Activated naive CD4-positive, alpha-beta T cell treated with anti-CD3 and anti-CD28 coated beads for 36 hours (primary cell): ENCODE measurements at regions of chr16 and their contacts with region 1.

Region 1: DNA sequence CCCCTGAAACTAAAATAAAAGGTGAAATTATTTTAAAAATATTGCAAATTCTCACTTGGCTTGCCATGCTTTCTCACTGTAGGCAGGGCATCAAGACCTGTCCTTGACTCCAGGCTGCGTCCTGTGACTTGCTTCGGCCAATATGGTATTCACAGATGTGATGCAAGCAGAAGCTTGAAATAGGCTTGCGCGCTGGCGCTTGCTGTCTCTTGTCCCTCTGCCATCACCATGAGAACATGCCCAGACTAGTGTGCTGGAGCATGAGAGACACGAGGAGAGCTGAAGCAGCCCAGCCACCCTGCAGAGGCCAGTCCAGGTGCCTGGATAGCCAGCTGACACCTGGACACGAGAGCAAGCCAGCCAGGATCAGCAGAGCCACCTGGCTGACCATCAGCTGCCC is 21.8 kb upstream of the ZKSCAN2 start:
- DNase-seq: no peak
- H3K4me3 Mint-ChIP-seq: no peak overlapping the region
- H3K27ac Mint-ChIP-seq: no peak overlapping the region
- H3K4me1 Mint-ChIP-seq: peaks cover 2% of the 10 kb centered on the region
- H3K27me3 Mint-ChIP-seq: peaks cover 2% of the 10 kb centered on the region

Region 2: DNA sequence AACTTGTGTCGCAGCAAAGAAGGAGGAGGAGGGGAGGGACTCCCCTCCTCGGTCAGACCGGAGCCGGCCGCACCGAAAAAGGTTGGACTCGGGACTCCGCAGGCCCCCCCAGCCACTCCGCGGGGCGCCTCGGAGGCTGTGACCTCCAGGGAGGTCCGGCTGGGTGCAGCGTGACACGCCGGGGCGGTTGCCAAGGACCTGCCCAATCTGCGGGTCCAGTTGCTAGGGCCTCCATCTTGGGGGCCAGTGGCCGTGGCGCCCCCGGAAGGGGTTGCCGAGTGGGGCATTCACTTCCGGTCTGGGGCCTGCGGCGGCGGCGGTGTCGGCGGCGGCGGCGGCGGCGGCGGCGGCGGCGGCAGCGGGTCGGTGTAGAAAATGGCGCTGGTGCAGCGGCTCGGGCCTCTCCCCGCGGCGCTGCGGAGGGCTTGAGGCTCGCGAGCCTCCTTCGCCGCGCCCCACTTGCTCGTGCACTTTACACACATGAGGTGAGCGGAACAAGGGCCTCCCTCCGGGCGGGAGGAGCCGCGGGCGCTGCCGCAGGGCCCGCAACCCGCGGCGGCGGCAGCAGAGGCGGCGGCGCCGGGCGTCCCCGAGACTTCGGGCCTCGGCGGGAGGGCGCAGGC is 550.0 kb before region 1 on chr16 and contains the start of gene TNRC6A:
- CTCF ChIA-PET with region 1: no interaction called
- intact Hi-C with region 1: no loop called
- DNase-seq: peak; percentile 77
- H3K4me3 Mint-ChIP-seq: peak within 1 kb of the TSS; percentile 96
- H3K27ac Mint-ChIP-seq: peak within 1 kb of the TSS; percentile 96
- H3K4me1 Mint-ChIP-seq: peaks cover 48% of the 10 kb centered on the region
- H3K27me3 Mint-ChIP-seq: no peaks in the 10 kb centered on the region
- total RNA-seq, gene TNRC6A: 37.2 to 39.0 TPM

Region 3: GRCh38 chr16:25298165-25298872 is 18.8 kb after region 1 on chr16:
- CTCF ChIA-PET with region 1: no interaction called
- intact Hi-C with region 1: no loop called
- DNase-seq: no peak
- H3K4me3 Mint-ChIP-seq: no peak overlapping the region
- H3K27ac Mint-ChIP-seq: no peak overlapping the region
- H3K4me1 Mint-ChIP-seq: peaks cover 9% of the 10 kb centered on the region
- H3K27me3 Mint-ChIP-seq: no peaks in the 10 kb centered on the region

Region 4: DNA sequence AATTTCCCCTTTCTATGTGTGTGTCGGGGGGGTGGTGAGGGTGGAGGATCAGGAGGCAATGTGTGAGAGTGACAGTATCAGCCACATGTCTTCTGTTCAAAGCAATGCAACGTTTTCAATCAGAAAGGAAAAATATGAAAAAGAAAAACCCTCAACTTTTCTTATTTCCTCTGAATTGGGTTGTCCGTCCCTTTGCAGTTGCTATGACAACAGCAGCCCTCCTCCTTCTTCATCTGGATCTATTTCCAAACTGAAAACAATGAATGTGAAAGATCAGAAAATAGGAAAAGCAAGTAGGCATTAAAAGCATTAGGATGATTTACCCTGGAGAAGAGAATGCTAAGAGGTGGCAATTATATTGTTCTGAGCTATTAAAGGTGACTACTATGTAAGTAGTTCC is 42.5 kb after region 1 on chr16:
- CTCF ChIA-PET with region 1: no interaction called
- intact Hi-C with region 1: loop called (anchors 2 kb)
- DNase-seq: no peak
- H3K4me3 Mint-ChIP-seq: no peak overlapping the region
- H3K27ac Mint-ChIP-seq: no peak overlapping the region
- H3K4me1 Mint-ChIP-seq: no peaks in the 10 kb centered on the region
- H3K27me3 Mint-ChIP-seq: peaks cover 24% of the 10 kb centered on the region

Region 5: DNA sequence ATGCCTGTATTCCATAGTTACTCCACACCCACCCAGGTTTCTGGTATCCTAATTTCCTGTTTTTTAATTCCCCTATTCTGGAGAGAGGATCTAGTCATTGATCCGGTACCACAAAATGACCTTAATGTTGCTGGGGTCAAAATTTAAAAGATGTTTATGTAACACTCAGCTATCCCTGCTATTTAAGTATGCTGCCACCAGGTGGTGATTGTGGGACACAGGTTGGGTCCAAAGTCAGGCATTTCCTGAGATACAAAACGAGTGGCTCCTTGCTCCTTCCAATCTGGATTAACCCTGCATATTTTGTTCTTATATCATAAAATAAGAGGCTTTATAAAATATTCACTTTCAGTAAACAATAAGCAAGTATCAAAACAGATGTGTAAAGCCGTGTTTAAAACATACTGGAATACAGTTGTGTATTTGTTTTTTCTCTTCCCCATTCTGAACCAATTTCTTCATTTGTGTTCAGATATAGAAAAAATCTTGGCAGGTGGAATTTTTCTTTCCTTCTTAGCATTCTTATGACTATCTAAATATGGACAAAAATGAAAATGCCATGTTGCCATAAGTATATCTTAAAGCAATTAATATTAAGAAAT is 428.6 kb after region 1 on chr16:
- CTCF ChIA-PET with region 1: interaction called, 3 read pairs
- intact Hi-C with region 1: loop called (anchors 5 kb)
- DNase-seq: peak; percentile 53
- H3K4me3 Mint-ChIP-seq: no peak overlapping the region
- H3K27ac Mint-ChIP-seq: no peak overlapping the region
- H3K4me1 Mint-ChIP-seq: no peaks in the 10 kb centered on the region
- H3K27me3 Mint-ChIP-seq: peaks cover 7% of the 10 kb centered on the region